ENCODE measurements at regions of chr16 and their contacts with region 1.

Region 1: GRCh38 chr16:57300387-57301125 is 16.1 kb upstream of the PLLP start:
- DNase-seq: peak; percentile 97 to 100 (median 99)

Region 2: GRCh38 chr16:57185944-57186871 is 114.3 kb before region 1 on chr16 and contains the starts of genes PSME3IP1 and RSPRY1:
- intact Hi-C with region 1: loop called (anchors 5 kb)
- DNase-seq: peak; percentile 97 to 100 (median 99)

Region 3: DNA sequence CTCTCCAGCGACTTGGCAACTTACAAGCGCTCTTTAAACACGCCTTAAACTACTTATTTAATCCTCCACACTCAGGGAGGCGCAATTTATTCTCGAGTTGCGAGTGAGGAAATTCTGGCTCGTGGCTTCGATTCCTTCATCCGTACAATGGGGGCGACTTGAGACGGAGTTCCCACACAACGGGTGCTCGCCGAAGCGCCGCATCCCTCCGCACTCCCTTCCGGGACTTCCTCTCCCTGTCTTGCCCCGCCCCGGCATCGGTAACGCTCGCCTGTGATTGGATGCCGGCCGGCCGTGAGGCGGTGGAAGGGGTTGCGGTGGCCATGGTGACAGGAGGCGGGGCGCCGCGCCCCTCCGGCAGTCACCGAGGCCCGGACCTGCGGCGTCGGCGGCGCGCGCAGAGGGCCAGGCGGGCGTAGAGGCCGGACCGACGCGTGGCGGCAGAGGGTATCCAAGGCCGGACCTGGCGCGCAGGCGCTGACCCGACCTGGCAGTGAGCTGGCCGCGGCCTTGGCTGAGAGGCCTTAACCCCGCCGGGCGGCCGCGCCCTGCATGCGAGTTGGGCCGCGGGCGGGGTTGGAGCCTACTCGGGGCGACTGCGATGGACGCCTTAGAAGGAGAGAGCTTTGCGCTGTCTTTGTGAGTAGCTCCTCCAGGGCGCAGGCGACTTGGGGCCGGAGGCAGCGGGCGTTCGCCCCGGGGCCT is 55.6 kb before region 1 on chr16 and contains the start of gene ARL2BP:
- intact Hi-C with region 1: loop called (anchors 1 kb)
- DNase-seq: peak; percentile 97 to 100 (median 99)

Region 4: GRCh38 chr16:57372372-57373116 is 72.0 kb after region 1 on chr16 and contains the start of gene CX3CL1:
- intact Hi-C with region 1: loop called (anchors 2 kb)
- DNase-seq: peak in 9 of 10 donors; percentile 59 to 98 (median 86)

Region 5: GRCh38 chr16:57422026-57422944 is 121.7 kb after region 1 on chr16:
- intact Hi-C with region 1: loop called (anchors 1 kb)
- DNase-seq: peak in 4 of 10 donors; percentile 26 to 75 (median 38)

Region 6: GRCh38 chr16:57519796-57520360 is 219.3 kb after region 1 on chr16:
- intact Hi-C with region 1: loop called (anchors 2 kb)
- DNase-seq: peak; percentile 67 to 97 (median 85)

Measured in posterior cingulate gyrus (tissue), 11 donors.